ENCODE measurements at regions of chr1 and their contacts with region 1.

Region 1: DNA sequence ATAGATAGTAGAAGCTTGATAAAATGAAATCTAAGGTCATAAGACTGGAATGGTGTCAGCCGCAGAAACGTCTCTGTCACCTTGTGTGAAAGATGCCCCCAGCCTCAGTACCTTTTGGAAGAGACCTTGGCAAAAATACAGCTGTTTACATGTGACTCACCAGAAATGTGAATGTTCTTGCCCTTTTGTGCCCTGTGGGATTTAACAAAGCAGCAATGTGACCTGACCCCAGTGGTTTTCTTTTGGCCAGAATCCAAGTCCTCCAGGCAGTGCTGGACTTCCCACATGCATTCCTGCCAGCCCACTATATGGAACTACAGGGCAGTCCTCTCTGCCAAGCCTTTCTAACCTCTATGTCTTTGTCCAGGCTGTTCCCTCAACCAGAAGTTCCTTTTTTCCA is 27.2 kb upstream of the LRRC8C start:
- DNase-seq: no peak
- H3K4me3 Mint-ChIP-seq: peak overlapping the region; percentile 5
- H3K27ac Mint-ChIP-seq: peak overlapping the region; percentile 99
- H3K4me1 Mint-ChIP-seq: peaks cover 90% of the 10 kb centered on the region
- H3K27me3 Mint-ChIP-seq: no peaks in the 10 kb centered on the region

Region 2: DNA sequence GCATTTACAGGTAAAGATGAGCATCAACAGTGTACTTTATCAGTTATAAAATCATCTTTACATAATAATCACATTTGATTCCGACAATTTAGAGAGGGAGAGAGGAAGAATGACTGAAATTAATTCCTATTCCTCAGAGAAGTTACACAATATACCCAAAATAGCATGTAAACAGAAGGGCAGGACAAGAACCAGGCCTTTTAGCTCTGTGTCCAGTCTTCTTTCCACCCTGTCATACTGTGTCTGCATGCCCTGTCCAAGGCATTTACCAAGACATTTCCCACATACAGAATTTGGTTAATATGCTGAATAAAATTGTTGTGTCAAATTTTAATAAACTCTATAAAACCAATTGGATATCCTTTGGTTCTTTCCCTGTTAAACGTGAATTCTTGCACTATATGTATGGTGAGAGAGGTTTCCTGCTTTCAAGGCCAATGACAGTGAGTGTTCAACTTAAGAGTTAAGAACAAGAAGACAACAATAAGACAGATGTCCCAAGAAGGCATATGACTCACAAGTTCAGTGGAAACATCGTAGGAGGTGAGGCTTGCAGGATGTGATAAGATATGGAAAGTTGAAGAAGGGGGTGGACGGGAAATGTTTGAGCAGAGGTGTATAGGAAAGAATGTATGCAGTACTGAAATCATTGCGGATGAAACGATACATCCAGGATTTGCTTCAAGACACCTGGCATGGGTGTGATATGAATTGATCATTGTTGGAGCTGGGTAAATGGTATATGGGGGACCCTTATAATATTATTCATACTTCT is 60.2 kb before region 1 on chr1:
- intact Hi-C with region 1: loop called (anchors 1 kb)
- DNase-seq: peak; percentile 26
- H3K4me3 Mint-ChIP-seq: peak overlapping the region; percentile 30
- H3K27ac Mint-ChIP-seq: peak overlapping the region; percentile 93
- H3K4me1 Mint-ChIP-seq: peaks cover 79% of the 10 kb centered on the region
- H3K27me3 Mint-ChIP-seq: no peaks in the 10 kb centered on the region

Region 3: DNA sequence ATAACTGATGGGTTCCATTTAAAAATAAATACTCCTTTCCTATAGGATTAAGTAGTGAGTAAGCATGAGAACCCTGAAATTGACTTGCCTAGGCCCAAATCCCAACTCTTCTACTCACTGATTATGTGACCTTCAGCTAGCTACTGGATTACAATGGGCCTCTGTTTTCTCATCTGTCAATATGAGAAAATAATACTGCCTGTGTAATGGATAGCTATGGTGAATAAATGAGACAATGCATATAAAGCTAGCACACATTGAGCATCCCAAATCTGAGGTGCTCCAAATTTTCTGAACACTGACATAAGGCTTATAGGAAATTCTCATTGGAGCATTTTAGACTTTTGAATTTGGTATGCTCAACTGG is 21.9 kb after region 1 on chr1:
- intact Hi-C with region 1: loop called (anchors 1 kb)
- DNase-seq: no peak
- H3K4me3 Mint-ChIP-seq: no peak overlapping the region
- H3K27ac Mint-ChIP-seq: no peak overlapping the region
- H3K4me1 Mint-ChIP-seq: peaks cover 61% of the 10 kb centered on the region
- H3K27me3 Mint-ChIP-seq: no peaks in the 10 kb centered on the region

Region 4: GRCh38 chr1:89657886-89658285 is 52.2 kb after region 1 on chr1:
- intact Hi-C with region 1: loop called (anchors 2 kb)
- DNase-seq: no peak
- H3K4me3 Mint-ChIP-seq: peak overlapping the region; percentile 14
- H3K27ac Mint-ChIP-seq: peak overlapping the region; percentile 75
- H3K4me1 Mint-ChIP-seq: peaks cover 79% of the 10 kb centered on the region
- H3K27me3 Mint-ChIP-seq: no peaks in the 10 kb centered on the region

Region 5: GRCh38 chr1:89762779-89763648 is 157.3 kb after region 1 on chr1:
- intact Hi-C with region 1: loop called (anchors 2 kb)
- DNase-seq: peak; percentile 80
- H3K4me3 Mint-ChIP-seq: peak overlapping the region; percentile 89
- H3K27ac Mint-ChIP-seq: peak overlapping the region; percentile 95
- H3K4me1 Mint-ChIP-seq: peaks cover 56% of the 10 kb centered on the region
- H3K27me3 Mint-ChIP-seq: no peaks in the 10 kb centered on the region

Region 6: DNA sequence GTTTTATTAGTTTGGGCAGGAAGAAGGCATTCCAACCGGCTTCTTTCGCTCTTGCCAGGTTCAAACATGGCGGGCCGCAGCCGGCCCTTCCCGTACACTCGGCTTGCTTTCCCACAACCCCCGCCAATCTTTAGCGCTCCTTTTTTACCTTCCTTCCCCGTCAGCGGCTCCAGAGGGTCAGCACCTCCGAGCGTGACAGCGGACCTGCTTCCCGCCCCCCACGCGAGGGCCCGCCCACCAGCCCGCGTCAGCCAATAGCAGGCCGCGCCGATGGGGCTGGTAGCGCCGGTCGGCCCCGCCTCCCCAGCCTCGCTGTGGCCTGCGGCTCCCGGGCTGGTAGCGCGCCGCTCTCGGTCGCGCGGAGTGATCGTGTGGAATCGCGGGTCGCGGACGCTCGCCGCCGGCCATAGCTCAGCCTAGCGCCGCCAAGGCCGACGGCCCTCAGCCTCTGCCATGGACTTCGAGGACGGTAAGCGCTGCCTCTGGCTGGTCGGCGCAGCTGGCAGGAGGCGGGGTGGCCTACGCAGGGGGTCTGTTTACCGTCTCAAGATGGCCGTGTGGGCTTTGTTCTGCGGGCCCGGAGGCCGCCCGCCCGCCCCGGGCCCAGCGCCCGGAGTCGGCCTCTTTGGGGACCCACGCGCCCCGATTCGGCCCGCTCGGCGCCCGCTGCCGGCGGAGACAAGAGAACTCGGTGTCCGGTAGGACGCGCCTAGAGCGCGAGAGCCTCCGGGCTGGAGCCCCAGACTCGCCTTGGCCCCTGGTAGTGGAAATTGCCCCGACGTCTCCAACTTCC is 389.3 kb after region 1 on chr1 and contains the start of gene ZNF326:
- intact Hi-C with region 1: loop called (anchors 5 kb)
- DNase-seq: peak; percentile 92
- H3K4me3 Mint-ChIP-seq: peak within 1 kb of the TSS; percentile 98
- H3K27ac Mint-ChIP-seq: peak within 1 kb of the TSS; percentile 98
- H3K4me1 Mint-ChIP-seq: peaks cover 41% of the 10 kb centered on the region
- H3K27me3 Mint-ChIP-seq: peaks cover 5% of the 10 kb centered on the region
- total RNA-seq, gene ZNF326: 32.8 and 33.1 TPM in 2 replicates